ENCODE measurements at regions of chr4 and their contacts with region 1.

Region 1: DNA sequence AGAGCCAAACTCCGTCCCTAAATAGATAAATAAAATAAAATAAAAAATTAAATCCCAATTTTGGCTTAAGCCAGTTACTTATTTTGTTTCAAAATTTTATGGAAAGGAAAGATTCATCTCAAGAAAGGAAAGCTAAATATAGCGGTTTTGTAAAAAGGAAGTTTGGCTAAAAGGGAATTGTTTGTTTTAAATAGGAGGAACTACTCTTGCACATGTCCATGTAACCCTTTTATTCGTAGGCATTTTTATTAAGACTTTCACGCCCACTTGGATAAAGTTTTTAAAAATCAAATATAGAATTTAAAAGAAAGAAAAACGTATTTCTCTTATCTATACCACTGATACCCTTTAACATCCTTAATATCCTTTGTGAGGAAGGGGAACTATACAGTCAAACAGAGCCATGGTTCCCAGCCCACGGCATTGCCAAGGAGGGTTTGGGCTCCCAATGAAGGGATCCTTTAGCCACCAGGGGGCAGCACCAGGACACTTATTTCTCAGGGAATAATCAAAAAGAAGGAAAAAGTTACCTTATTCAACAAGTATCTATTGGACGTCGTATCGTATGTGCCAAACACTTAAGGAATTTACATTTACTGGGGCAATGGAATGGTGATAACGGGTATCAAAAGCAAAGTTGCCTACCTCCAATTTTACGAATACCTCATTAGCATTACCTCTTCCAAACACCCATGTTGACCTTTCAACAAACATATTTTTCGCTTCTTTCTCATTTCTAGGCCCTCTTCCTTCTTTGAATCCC is 27.7 kb downstream of the CDKN2AIP start:
- DNase-seq: peak; percentile 84
- H3K4me3 ChIP-seq: peak overlapping the region; percentile 9
- H3K27ac ChIP-seq: no peak overlapping the region
- H3K4me1 ChIP-seq: peaks cover 3% of the 10 kb centered on the region
- H3K27me3 ChIP-seq: no peaks in the 10 kb centered on the region
- CTCF ChIP-seq: peak; percentile 91

Region 2: GRCh38 chr4:183602557-183603027 is 130.5 kb after region 1 on chr4:
- intact Hi-C with region 1: loop called (anchors 10 kb)
- DNase-seq: no peak
- H3K4me3 ChIP-seq: no peak overlapping the region
- H3K27ac ChIP-seq: no peak overlapping the region
- H3K4me1 ChIP-seq: no peaks in the 10 kb centered on the region
- H3K27me3 ChIP-seq: peaks cover 10% of the 10 kb centered on the region
- CTCF ChIP-seq: peak; percentile 57

Measured in left ventricle myocardium inferior (tissue), 1 donor.